Gastrocnemius medialis (tissue), 4 donors: ENCODE measurements at regions of chr17 and their contacts with region 1.

Region 1: DNA sequence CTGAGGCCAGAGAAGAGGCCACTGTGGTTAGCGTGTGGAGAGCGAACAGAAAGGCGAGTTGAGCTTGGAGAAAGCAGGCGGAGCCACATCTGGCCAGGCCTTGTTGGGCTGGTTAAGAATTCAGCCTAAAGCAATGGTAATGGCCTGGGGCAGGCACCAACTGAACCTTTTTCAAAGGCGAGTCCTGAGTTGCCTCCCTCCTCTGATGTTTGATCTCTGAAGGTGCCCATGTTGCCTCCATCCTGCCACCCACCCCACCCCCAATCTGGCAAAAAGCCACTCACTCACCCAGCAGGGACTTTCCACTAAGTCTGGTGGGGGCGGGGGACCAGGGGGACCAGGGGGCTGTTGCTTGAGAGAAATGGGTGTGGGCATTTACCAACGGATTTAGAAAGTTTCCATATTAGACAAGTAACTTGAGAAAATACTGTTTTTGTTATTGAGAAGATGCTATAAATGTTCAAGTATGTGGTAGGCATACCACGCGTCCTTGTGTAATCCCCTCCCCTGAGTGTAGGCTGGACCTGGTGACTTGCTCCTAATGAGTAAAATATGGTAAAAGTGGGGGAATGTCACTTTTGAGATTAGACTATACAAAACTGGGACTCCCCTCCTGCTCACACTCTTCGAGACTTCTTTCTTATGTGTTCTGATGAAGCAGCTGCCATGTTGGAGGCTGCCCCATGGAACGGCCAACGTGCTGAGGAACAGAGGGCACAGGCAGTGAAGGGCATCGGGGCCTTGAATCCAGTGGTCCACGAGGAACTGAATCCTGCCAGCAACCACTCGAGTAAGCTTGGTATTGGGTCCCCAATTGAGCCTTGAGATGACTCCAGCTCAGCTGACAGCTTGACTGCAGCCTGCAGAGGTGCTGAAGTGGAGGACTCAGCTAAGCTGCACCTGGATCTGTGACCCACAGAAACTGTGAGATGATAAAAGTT is 29.9 kb upstream of the TNS4 start:
- DNase-seq: peak in 1 of 2 donors; percentile 11
- ATAC-seq: no peak
- H3K4me3 ChIP-seq: no peak overlapping the region
- H3K27ac ChIP-seq: peak overlapping the region in 1 of 4 donors; percentile 46
- H3K4me1 ChIP-seq: peaks cover 15 to 17% of the 10 kb centered on the region in 2 donors
- H3K27me3 ChIP-seq: no peaks in the 10 kb centered on the region
- CTCF ChIP-seq: no peak
- POLR2A ChIP-seq: no peak

Region 2: DNA sequence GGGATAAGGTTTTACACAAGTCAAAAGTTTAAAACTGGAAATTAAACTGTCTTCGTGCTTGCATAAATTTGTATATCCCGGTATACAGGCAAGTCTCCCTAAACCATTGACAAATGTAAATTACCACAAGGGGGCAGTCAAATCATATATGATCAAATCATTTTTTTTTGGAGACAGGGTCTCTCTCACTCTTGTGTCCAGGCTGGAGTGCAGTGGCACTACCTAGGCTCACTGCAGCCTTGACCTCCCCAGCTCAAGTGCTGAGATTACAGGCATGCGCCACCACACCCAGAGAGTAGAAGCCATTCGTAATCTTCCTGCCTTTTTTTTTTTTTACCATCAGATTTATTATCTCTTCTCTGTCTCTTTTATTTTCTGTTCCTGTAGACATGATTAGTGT is 132.1 kb before region 1 on chr17:
- in situ Hi-C with region 1: no loop called
- intact Hi-C with region 1: loop called (anchors 1 kb)
- DNase-seq: no peak
- ATAC-seq: peak in 1 of 2 donors; percentile 74
- H3K4me3 ChIP-seq: no peak overlapping the region
- H3K27ac ChIP-seq: no peak overlapping the region
- H3K4me1 ChIP-seq: no peaks in the 10 kb centered on the region
- H3K27me3 ChIP-seq: no peaks in the 10 kb centered on the region
- CTCF ChIP-seq: peak; percentile 47 to 71 (median 56)
- POLR2A ChIP-seq: no peak

Region 3: DNA sequence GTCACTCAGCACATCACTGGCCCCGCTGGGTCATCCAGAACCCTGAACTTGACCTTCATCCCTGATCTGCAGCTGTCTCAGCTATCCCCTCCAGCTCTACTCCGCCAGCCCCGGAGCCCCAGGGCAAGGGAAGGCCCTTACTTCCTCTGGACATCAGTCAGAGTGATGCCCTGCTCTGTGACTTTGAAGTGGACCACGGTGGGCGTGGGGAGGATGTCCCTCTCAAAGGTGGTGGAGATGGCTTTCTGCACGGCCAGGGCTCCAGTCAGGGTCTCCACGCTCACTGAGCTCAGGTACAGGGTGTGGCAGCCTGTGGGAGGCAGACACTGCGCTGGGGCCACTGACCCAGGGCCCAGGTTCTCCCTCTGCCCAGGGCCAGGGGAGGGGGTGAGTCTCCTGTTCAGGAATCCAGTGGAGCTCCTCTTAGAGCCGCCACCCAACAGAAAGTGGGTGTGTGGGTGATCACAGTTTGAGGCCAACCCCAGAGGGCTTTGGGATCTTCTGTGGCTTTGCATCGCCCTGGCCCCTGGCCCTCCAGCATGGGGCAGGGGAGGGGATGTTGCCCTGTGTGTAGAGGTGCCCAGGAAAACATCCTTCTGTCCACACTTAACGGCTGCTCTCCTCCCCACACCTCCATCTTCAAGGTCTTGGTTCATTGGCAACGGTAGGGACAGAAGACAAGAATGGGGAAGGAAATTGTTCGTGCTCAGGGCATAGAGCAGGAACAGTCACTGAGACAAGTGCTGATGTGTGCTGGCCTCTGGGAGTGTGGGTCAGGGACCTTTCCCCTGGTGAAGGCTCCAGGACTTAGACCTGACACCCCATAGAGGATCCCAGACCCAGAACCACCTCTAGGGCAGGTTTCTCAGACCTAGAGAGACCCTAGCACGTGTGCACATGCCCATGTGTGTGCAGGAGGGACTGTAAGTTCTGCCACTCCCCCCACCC is 51.5 kb before region 1 on chr17:
- in situ Hi-C with region 1: no loop called
- intact Hi-C with region 1: loop called (anchors 5 kb)
- DNase-seq: no peak
- ATAC-seq: no peak
- H3K4me3 ChIP-seq: no peak overlapping the region
- H3K27ac ChIP-seq: no peak overlapping the region
- H3K4me1 ChIP-seq: peaks cover 0 to 10% of the 10 kb centered on the region in 2 donors
- H3K27me3 ChIP-seq: no peaks in the 10 kb centered on the region
- CTCF ChIP-seq: no peak
- POLR2A ChIP-seq: no peak

Region 4: DNA sequence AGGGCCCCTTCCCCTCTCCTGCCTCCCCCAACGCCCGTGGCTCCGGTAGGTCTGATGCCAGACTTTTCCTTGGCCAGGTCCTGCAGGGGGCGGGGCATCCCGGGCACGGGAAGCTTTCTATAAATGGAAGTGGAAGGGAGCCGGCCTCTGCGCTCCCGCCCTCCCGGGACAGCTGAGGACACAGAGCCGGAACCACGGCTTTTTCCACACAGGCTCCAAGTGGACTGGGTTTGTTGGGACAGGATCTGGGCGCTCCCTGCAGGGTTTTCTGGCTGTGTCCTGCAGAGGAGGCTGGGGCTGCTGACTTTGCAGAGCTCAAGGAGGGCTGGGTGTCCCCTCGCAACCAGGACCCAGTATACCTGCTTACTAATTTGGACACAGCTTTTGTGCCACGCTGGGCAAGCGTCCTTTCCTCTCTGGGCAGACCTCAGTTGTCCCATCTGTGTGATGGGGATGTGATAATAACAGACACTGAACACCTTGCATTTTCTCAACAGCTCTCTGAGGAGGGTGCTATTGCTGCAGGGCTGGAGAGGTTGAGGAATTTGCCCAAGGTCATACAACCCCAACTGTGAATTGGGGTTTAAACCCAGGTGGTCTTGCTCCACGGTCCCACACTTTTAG is 31.7 kb before region 1 on chr17:
- in situ Hi-C with region 1: no loop called
- intact Hi-C with region 1: loop called (anchors 5 kb)
- DNase-seq: peak; percentile 81 to 93
- ATAC-seq: peak; percentile 94 to 95
- H3K4me3 ChIP-seq: peak overlapping the region; percentile 11 to 20 (median 18)
- H3K27ac ChIP-seq: peak overlapping the region; percentile 55 to 76 (median 63)
- H3K4me1 ChIP-seq: peaks cover 16 to 18% of the 10 kb centered on the region in 2 donors
- H3K27me3 ChIP-seq: no peaks in the 10 kb centered on the region
- CTCF ChIP-seq: peak in 2 of 5 experiments; percentile 10 to 19
- POLR2A ChIP-seq: no peak

Region 5: GRCh38 chr17:40516581-40517285 is 14.6 kb before region 1 on chr17:
- in situ Hi-C with region 1: no loop called
- intact Hi-C with region 1: no loop called
- DNase-seq: peak in 1 of 2 donors; percentile 7
- ATAC-seq: no peak
- H3K4me3 ChIP-seq: no peak overlapping the region
- H3K27ac ChIP-seq: no peak overlapping the region
- H3K4me1 ChIP-seq: peaks cover 7% of the 10 kb centered on the region in 2 donors
- H3K27me3 ChIP-seq: no peaks in the 10 kb centered on the region
- CTCF ChIP-seq: no peak
- POLR2A ChIP-seq: no peak